ENCODE measurements at regions of chr9 and their contacts with region 1.

Region 1: GRCh38 chr9:72827950-72828731 is 124.7 kb downstream of the ALDH1A1 start:
- DNase-seq: peak; percentile 90
- ATAC-seq: peak; percentile 98
- H3K4me3 ChIP-seq: peak overlapping the region in 2 of 3 experiments; percentile 6 to 11; a peak in 1 of 6 replicates
- H3K27ac ChIP-seq: peak overlapping the region; percentile 69
- H3K4me1 ChIP-seq: peaks cover 41% of the 10 kb centered on the region
- H3K27me3 ChIP-seq: no peaks in the 10 kb centered on the region
- CTCF ChIP-seq: no peak
- EP300 ChIP-seq: peak in 1 of 2 experiments; percentile 54; a peak in 2 of 4 replicates
- POLR2A ChIP-seq: no peak
- RAD21 ChIP-seq: no peak

Region 2: GRCh38 chr9:72129271-72130156 is 698.6 kb before region 1 on chr9:
- CTCF ChIA-PET with region 1: no interaction called
- POLR2A ChIA-PET with region 1: no interaction called
- in situ Hi-C with region 1: no loop called
- intact Hi-C with region 1: loop called (anchors 10 kb)
- DNase-seq: peak; percentile 91
- ATAC-seq: peak; percentile 98
- H3K4me3 ChIP-seq: peak overlapping the region in 2 of 3 experiments; percentile 8 to 35; a peak in 2 of 6 replicates
- H3K27ac ChIP-seq: peak overlapping the region; percentile 65
- H3K4me1 ChIP-seq: peaks cover 72% of the 10 kb centered on the region
- H3K27me3 ChIP-seq: no peaks in the 10 kb centered on the region
- CTCF ChIP-seq: no peak
- EP300 ChIP-seq: peak in 1 of 2 experiments; percentile 81; a peak in 2 of 4 replicates
- POLR2A ChIP-seq: no peak
- RAD21 ChIP-seq: no peak

Region 3: GRCh38 chr9:72280913-72281500 is 547.1 kb before region 1 on chr9:
- CTCF ChIA-PET with region 1: interaction called, 8 read pairs
- POLR2A ChIA-PET with region 1: no interaction called
- in situ Hi-C with region 1: loop called (anchors 10 kb)
- intact Hi-C with region 1: loop called (anchors 2 kb)
- DNase-seq: peak; percentile 38
- ATAC-seq: peak; percentile 95
- H3K4me3 ChIP-seq: no peak overlapping the region
- H3K27ac ChIP-seq: no peak overlapping the region
- H3K4me1 ChIP-seq: no peaks in the 10 kb centered on the region
- H3K27me3 ChIP-seq: no peaks in the 10 kb centered on the region
- CTCF ChIP-seq: peak; percentile 91
- EP300 ChIP-seq: no peak
- POLR2A ChIP-seq: no peak
- RAD21 ChIP-seq: peak; percentile 86

Region 4: GRCh38 chr9:72356041-72356582 is 472.0 kb before region 1 on chr9:
- CTCF ChIA-PET with region 1: no interaction called
- POLR2A ChIA-PET with region 1: no interaction called
- in situ Hi-C with region 1: loop called (anchors 10 kb)
- intact Hi-C with region 1: loop called (anchors 10 kb)
- DNase-seq: no peak
- ATAC-seq: no peak
- H3K4me3 ChIP-seq: no peak overlapping the region
- H3K27ac ChIP-seq: no peak overlapping the region
- H3K4me1 ChIP-seq: peaks cover 62% of the 10 kb centered on the region
- H3K27me3 ChIP-seq: no peaks in the 10 kb centered on the region
- CTCF ChIP-seq: no peak
- EP300 ChIP-seq: no peak
- POLR2A ChIP-seq: no peak
- RAD21 ChIP-seq: no peak

Region 5: DNA sequence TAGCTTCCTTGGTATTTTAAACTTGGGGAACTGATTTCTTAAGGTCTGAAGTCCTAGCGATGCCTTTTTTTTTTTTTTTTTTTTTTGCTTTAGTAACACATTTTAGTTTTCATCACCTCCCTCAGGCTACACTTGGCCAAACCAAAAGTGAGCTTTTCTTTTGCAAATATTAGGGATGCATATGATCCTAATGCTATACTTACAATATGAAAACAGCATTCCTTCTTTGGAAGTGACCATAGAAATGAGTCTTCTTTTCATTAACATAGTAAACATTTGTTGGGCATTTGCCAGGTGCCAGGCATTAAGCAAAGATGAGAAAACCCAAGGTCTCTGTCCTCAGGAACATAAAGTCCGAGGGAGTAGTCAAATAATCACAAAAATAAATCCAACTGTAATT is 65.1 kb before region 1 on chr9:
- CTCF ChIA-PET with region 1: no interaction called
- POLR2A ChIA-PET with region 1: no interaction called
- in situ Hi-C with region 1: no loop called
- intact Hi-C with region 1: no loop called
- DNase-seq: no peak
- ATAC-seq: no peak
- H3K4me3 ChIP-seq: no peak overlapping the region
- H3K27ac ChIP-seq: no peak overlapping the region
- H3K4me1 ChIP-seq: no peaks in the 10 kb centered on the region
- H3K27me3 ChIP-seq: no peaks in the 10 kb centered on the region
- CTCF ChIP-seq: no peak
- EP300 ChIP-seq: no peak
- POLR2A ChIP-seq: no peak
- RAD21 ChIP-seq: no peak

Region 6: DNA sequence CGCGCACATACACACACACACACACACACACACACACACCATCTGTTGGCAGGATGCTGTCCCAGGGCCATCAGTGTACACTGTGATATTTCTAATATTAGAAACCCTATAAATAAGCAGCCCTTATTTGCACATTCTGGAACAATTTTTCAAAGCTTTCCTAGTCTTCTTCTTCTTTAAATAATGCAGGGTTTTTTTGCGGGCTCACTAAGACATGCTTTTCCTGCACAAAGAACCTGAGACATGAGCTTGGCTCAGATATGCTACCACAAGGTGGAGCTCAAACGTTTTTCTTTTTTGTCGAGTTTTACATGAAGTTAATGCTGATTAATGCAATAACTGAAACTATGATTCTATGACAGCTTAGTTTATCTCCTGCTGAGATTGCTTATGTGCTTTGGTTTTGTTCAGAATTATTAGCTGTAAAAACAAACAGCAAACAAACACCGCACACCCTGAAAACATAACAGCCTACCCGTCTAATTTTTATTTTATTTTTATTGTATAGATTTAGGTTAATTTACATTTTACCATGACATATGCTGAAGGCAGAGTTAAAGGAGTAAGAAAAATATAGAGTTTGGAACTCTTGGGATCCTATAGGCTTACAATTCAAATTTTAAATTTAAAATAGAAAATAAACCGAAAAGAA is 29.0 kb after region 1 on chr9:
- CTCF ChIA-PET with region 1: no interaction called
- POLR2A ChIA-PET with region 1: no interaction called
- in situ Hi-C with region 1: no loop called
- intact Hi-C with region 1: no loop called
- DNase-seq: peak; percentile 65
- ATAC-seq: no peak
- H3K4me3 ChIP-seq: no peak overlapping the region
- H3K27ac ChIP-seq: peak overlapping the region; percentile 99
- H3K4me1 ChIP-seq: peaks cover 30% of the 10 kb centered on the region
- H3K27me3 ChIP-seq: no peaks in the 10 kb centered on the region
- CTCF ChIP-seq: peak; percentile 70
- EP300 ChIP-seq: no peak
- POLR2A ChIP-seq: no peak
- RAD21 ChIP-seq: peak; percentile 43; the same call in 1 of the 2 replicates